Activated CD4-positive, alpha-beta memory T cell treated with anti-CD3 and anti-CD28 coated beads for 36 hours (primary cell): ENCODE measurements at regions of chr11 and their contacts with region 1.

Region 1: GRCh38 chr11:105100206-105100605 is 39.4 kb downstream of the CARD18 start:
- DNase-seq: peak; percentile 57
- H3K4me3 Mint-ChIP-seq: peak overlapping the region; percentile 53
- H3K27ac Mint-ChIP-seq: peak overlapping the region; percentile 34
- H3K4me1 Mint-ChIP-seq: peaks cover 35% of the 10 kb centered on the region
- H3K27me3 Mint-ChIP-seq: no peaks in the 10 kb centered on the region

Region 2: DNA sequence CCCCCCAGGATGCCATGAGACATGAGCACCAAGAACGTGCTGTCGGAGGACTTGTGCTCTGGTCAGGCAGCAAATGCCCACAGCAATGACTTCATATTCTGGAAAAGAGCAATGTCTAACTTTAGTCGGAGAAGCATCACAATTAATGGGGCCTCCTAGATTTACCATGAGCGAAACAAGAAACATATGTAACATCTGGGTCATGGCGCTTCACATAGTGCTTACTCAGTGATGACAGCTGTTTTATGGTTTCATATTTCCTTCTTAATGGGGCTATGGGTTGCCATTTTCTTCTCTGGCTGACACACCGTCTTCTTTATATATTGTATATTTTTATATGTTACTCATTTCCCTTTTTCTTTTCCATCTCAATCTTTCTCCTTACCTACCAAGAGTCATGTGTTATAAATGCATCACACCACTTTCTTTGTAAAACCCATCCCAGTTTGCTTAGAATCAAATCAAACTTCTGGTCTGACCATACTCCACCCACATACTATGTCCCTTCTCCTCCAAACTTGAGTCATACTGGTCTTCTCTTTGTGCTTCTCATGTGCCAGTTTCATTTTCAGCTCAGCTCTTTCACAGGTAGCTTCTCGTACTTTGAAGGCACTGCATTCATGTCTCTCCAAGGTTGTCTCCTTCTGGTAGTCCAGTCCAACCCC is 192.6 kb before region 1 on chr11:
- CTCF ChIA-PET with region 1: no interaction called
- POLR2A ChIA-PET with region 1: no interaction called
- intact Hi-C with region 1: loop called (anchors 1 kb)
- DNase-seq: peak; percentile 20
- H3K4me3 Mint-ChIP-seq: peak overlapping the region; percentile 24
- H3K27ac Mint-ChIP-seq: peak overlapping the region; percentile 76
- H3K4me1 Mint-ChIP-seq: peaks cover 30% of the 10 kb centered on the region
- H3K27me3 Mint-ChIP-seq: no peaks in the 10 kb centered on the region

Region 3: DNA sequence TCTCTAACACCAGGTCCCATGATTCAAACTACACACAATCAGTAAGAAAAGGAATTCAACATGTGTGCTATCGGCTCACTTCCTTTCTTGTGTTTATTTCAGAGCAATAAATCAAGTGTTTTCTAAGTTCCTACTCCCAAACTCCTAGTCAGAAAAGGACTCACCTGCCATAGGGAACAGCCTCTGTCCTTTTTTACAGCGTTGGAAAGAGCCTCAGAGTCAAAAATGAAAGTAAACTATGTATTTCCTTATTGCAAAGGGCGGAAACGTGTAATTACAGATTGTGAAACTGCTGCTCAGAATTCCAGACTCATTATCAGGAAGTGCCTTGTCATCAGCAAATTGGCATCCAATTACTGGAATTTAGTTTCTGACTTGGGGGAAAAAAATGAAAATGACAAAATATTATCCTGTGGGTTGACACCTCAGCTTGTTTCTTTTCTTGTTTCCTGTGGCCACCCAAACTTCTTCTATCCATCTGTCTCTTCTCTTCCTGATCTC is 131.8 kb before region 1 on chr11 and contains the start of gene CASP4:
- CTCF ChIA-PET with region 1: no interaction called
- POLR2A ChIA-PET with region 1: no interaction called
- intact Hi-C with region 1: loop called (anchors 5 kb)
- DNase-seq: no peak
- H3K4me3 Mint-ChIP-seq: peak within 1 kb of the TSS; percentile 89
- H3K27ac Mint-ChIP-seq: peak within 1 kb of the TSS; percentile 92
- H3K4me1 Mint-ChIP-seq: peaks cover 36% of the 10 kb centered on the region
- H3K27me3 Mint-ChIP-seq: no peaks in the 10 kb centered on the region
- total RNA-seq, gene CASP4: 58.2 to 58.3 TPM

Region 4: GRCh38 chr11:105034813-105035620 is 65.2 kb before region 1 on chr11 and contains the start of gene CASP1:
- CTCF ChIA-PET with region 1: no interaction called
- POLR2A ChIA-PET with region 1: no interaction called
- intact Hi-C with region 1: loop called (anchors 2 kb)
- DNase-seq: peak; percentile 45
- H3K4me3 Mint-ChIP-seq: peak within 1 kb of the TSS; percentile 88
- H3K27ac Mint-ChIP-seq: peak within 1 kb of the TSS; percentile 94
- H3K4me1 Mint-ChIP-seq: peaks cover 42% of the 10 kb centered on the region
- H3K27me3 Mint-ChIP-seq: no peaks in the 10 kb centered on the region
- total RNA-seq, gene CASP1: 28.5 to 37.1 TPM

Region 5: GRCh38 chr11:105054723-105055493 is 45.3 kb before region 1 on chr11:
- CTCF ChIA-PET with region 1: no interaction called
- POLR2A ChIA-PET with region 1: no interaction called
- intact Hi-C with region 1: no loop called
- DNase-seq: no peak
- H3K4me3 Mint-ChIP-seq: no peak overlapping the region
- H3K27ac Mint-ChIP-seq: no peak overlapping the region
- H3K4me1 Mint-ChIP-seq: no peaks in the 10 kb centered on the region
- H3K27me3 Mint-ChIP-seq: no peaks in the 10 kb centered on the region

Region 6: GRCh38 chr11:105081412-105082087 is 18.7 kb before region 1 on chr11:
- CTCF ChIA-PET with region 1: no interaction called
- POLR2A ChIA-PET with region 1: no interaction called
- intact Hi-C with region 1: loop called (anchors 1 kb)
- DNase-seq: no peak
- H3K4me3 Mint-ChIP-seq: no peak overlapping the region
- H3K27ac Mint-ChIP-seq: no peak overlapping the region
- H3K4me1 Mint-ChIP-seq: peaks cover 27% of the 10 kb centered on the region
- H3K27me3 Mint-ChIP-seq: no peaks in the 10 kb centered on the region

Region 7: DNA sequence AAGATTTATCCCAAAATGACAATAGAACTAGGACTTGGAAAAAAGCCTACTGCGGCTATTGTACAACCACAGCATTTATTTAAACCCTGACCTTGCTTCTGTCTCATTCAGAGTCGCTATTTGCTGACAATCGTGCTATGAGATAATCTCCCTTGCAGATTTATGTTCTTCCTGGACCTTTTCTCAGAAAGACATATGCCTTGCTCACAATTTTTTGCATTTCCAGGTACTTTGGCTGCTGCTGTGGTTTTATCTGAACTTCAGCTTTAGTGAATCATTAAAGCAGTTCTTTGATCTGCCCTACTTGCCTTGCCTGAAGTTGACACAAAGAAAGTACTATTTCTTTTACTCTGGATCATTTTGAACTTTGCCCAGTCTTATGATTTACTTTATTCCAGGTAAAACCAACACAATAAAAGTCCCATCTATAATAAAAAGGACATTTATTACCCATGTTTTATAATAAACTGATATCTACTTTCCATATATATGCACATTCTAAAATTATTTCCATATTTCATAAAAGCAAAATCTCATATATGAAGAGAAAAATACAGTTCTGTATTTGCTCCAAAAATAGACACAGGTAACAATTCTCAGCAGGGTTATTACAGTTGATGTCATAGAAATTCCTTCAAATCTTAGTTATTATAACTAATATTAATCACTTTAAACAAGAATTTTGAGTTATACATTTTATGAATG is 102.8 kb after region 1 on chr11:
- CTCF ChIA-PET with region 1: no interaction called
- POLR2A ChIA-PET with region 1: no interaction called
- intact Hi-C with region 1: loop called (anchors 1 kb)
- DNase-seq: no peak
- H3K4me3 Mint-ChIP-seq: peak overlapping the region; percentile 20
- H3K27ac Mint-ChIP-seq: no peak overlapping the region
- H3K4me1 Mint-ChIP-seq: peaks cover 16% of the 10 kb centered on the region
- H3K27me3 Mint-ChIP-seq: no peaks in the 10 kb centered on the region